WTC11 (cell line): ENCODE measurements at regions of chr2 and their contacts with region 1.

Region 1: DNA sequence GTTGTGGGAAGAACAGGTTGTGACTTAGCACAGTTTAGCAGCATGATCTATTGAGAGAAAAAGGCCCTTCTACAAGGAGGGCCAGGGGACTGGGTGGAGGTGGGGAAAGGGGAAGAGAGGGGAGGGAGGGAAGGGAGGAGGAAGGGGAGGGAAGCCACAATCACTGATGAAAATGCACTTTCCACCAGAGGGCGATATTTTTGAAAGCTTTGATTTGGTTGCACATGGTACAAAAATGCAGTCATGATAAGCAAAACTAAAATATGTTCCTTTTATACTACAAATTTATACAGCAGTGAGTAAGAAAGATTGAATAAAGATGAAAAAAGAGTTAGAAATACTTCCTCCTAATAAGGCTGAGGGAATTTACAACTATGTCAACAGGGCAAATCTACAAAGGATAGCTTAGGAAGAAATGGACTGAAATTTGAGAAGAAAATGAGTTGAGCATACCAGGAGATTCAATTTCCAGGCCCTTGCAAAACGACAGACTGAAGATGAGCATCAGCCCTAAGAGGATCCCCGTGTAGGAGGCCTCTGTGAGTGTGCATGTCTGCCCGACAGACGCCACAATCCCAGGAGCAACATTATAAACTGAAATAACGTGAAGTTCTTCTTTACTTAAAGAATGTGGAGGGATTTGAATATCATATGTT is 17.2 kb downstream of the SH3YL1 start:
- DNase-seq: no peak
- ATAC-seq: no peak; the same call in 1 of the 2 replicates
- H3K4me3 Mint-ChIP-seq: no peak overlapping the region
- H3K27ac Mint-ChIP-seq: no peak overlapping the region
- H3K4me1 Mint-ChIP-seq: no peaks in the 10 kb centered on the region; the same call in 1 of the 2 replicates
- H3K27me3 Mint-ChIP-seq: no peaks in the 10 kb centered on the region
- CTCF ChIP-seq: peak; percentile 44; the same call in 1 of the 2 replicates

Region 2: GRCh38 chr2:166381-166780 is 80.2 kb before region 1 on chr2:
- CTCF ChIA-PET with region 1: no interaction called
- POLR2A ChIA-PET with region 1: no interaction called
- DNase-seq: no peak
- ATAC-seq: no peak
- H3K4me3 Mint-ChIP-seq: no peak overlapping the region
- H3K27ac Mint-ChIP-seq: no peak overlapping the region
- H3K4me1 Mint-ChIP-seq: peaks cover 16% of the 10 kb centered on the region
- H3K27me3 Mint-ChIP-seq: no peaks in the 10 kb centered on the region; the same call in 1 of the 2 replicates
- CTCF ChIP-seq: no peak

Region 3: DNA sequence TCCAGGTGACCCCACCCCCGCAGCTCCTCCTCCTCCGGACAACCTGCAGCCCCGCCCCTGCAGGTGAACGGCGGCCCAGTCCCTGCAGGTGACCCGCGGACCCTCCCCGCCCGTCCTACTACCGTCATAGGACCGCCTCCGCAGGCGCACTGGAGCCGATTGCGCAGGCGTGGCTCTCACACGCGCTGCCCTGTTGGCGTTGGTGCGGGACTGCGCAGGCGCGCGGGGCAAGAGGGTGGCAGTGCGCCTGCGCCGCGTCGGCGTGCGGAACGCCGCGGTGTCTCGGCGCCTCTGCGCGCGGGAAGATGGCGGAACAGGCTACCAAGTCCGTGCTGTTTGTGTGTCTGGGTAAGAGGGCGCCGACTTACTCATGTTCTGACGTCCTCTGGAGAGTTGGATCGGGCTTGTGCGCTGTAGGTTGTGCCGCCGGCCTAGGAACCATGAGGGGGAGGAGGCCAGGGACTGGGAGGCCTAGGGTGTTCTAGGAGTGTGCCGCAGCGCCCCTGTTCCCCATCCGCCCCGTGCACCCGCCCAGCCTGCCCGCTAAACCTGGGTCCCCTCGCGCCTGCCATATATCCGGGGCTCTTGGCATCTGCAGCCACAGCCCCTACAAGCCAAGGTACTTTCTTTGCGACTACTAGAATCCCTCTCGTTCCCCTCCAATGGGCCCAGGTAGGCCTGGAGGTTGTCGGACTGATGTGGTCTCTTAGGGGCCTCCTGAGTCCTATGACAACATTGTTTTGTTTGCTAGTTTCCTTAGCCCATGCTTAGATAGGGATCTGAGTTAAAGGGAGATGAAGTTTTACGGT is 18.2 kb after region 1 on chr2 and contains the start of gene ACP1:
- CTCF ChIA-PET with region 1: interaction called, 14 read pairs
- POLR2A ChIA-PET with region 1: interaction called, 3 read pairs
- DNase-seq: peak; percentile 99
- ATAC-seq: peak; percentile 93
- H3K4me3 Mint-ChIP-seq: peak within 1 kb of the TSS; percentile 89
- H3K27ac Mint-ChIP-seq: peak within 1 kb of the TSS; percentile 94
- H3K4me1 Mint-ChIP-seq: peaks cover 44% of the 10 kb centered on the region
- H3K27me3 Mint-ChIP-seq: peaks cover 20% of the 10 kb centered on the region
- CTCF ChIP-seq: no peak
- total RNA-seq, gene ACP1: 145 to 150 TPM (median 146 TPM) in 3 replicates

Region 4: GRCh38 chr2:290090-290722 is 43.6 kb after region 1 on chr2:
- CTCF ChIA-PET with region 1: interaction called, 14 read pairs
- POLR2A ChIA-PET with region 1: no interaction called
- DNase-seq: peak; percentile 81
- ATAC-seq: peak; percentile 50
- H3K4me3 Mint-ChIP-seq: peak overlapping the region; percentile 80
- H3K27ac Mint-ChIP-seq: no peak overlapping the region
- H3K4me1 Mint-ChIP-seq: peaks cover 22% of the 10 kb centered on the region
- H3K27me3 Mint-ChIP-seq: peaks cover 67% of the 10 kb centered on the region
- CTCF ChIP-seq: peak; percentile 49